Psoas muscle (tissue), 8 donors: ENCODE measurements at regions of chr12 and their contacts with region 1.

Region 1: GRCh38 chr12:89461649-89462612 is 62.7 kb downstream of the GALNT4 start:
- DNase-seq: no peak
- ATAC-seq: peak; percentile 79 to 96 (median 84)
- H3K4me3 ChIP-seq: peak overlapping the region; percentile 20
- H3K27ac ChIP-seq: peak overlapping the region; percentile 1
- H3K4me1 ChIP-seq: no peaks in the 10 kb centered on the region
- H3K27me3 ChIP-seq: no peaks in the 10 kb centered on the region
- CTCF ChIP-seq: peak; percentile 59

Region 2: DNA sequence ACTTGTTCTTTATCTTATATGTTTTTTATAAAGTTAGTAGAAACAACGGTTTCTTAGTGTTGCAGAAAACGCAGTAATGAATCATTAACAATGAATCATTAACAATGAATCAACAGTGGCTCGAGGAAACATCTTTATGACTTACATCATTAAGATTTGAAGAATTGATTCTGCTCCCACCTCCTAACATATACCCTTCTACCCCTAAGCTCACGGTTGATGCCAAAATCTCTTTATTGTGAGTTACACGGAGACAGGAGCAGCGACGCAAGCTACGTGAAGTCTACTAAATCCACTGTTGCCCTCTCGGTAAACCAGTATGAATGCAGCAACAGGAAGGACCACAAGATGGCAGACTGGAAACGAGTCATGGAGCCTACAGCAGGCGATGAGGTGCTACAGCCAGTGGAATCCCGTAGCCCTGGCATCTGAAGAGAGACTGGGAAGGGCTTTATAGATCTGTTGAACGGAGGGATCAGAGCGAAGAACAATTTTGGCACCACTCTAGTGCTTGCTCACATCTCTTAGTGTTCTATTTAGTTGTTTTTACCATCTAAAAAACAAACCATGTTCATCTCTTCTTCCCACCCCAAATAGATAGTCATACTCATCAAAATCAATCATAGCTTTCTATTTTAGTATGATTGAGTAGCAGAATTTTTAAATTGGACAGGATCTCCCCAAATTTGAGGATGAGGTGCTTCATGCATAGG is 442.4 kb before region 1 on chr12:
- intact Hi-C with region 1: loop called (anchors 2 to 5 kb)
- DNase-seq: peak; percentile 51 to 60
- ATAC-seq: peak; percentile 88 to 99 (median 91)
- H3K4me3 ChIP-seq: peak overlapping the region; percentile 40
- H3K27ac ChIP-seq: no peak overlapping the region
- H3K4me1 ChIP-seq: no peaks in the 10 kb centered on the region
- H3K27me3 ChIP-seq: no peaks in the 10 kb centered on the region
- CTCF ChIP-seq: peak; percentile 81

Region 3: DNA sequence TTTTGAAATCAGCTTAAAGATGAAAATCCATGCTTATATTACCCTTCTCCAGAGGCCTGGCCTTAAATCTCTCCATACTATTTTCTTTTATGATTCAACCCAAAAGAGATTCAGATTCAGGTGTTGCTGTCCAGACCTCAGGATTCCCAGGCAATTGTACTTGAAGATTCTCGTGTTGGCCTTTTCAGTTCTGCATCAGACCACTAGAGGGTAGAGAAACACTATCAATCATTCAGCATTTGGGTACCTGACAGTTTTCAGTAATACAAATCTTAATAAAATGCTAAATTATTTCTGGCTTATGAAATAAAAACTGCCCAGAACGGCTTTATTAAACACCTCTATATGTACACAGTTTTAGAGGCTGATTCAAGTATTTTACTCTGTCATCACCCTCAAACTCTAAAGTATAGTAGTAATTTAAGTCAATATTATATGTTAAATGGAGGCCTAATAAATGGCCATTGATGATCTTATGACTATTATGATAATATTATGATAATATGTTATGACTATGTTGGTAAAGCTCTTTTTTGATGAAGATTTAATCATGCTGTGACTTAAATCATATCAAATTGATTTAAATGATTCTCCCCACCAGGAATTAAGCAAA is 410.8 kb before region 1 on chr12:
- intact Hi-C with region 1: loop called (anchors 1 to 2 kb)
- DNase-seq: no peak
- ATAC-seq: peak; percentile 51 to 82 (median 60)
- H3K4me3 ChIP-seq: no peak overlapping the region
- H3K27ac ChIP-seq: no peak overlapping the region
- H3K4me1 ChIP-seq: no peaks in the 10 kb centered on the region
- H3K27me3 ChIP-seq: no peaks in the 10 kb centered on the region
- CTCF ChIP-seq: peak; percentile 91

Region 4: GRCh38 chr12:89417246-89417977 is 44.5 kb before region 1 on chr12:
- intact Hi-C with region 1: no loop called
- DNase-seq: no peak
- ATAC-seq: no peak
- H3K4me3 ChIP-seq: no peak overlapping the region
- H3K27ac ChIP-seq: no peak overlapping the region
- H3K4me1 ChIP-seq: no peaks in the 10 kb centered on the region
- H3K27me3 ChIP-seq: no peaks in the 10 kb centered on the region
- CTCF ChIP-seq: no peak